ENCODE measurements at regions of chr19 and their contacts with region 1.

Region 1: DNA sequence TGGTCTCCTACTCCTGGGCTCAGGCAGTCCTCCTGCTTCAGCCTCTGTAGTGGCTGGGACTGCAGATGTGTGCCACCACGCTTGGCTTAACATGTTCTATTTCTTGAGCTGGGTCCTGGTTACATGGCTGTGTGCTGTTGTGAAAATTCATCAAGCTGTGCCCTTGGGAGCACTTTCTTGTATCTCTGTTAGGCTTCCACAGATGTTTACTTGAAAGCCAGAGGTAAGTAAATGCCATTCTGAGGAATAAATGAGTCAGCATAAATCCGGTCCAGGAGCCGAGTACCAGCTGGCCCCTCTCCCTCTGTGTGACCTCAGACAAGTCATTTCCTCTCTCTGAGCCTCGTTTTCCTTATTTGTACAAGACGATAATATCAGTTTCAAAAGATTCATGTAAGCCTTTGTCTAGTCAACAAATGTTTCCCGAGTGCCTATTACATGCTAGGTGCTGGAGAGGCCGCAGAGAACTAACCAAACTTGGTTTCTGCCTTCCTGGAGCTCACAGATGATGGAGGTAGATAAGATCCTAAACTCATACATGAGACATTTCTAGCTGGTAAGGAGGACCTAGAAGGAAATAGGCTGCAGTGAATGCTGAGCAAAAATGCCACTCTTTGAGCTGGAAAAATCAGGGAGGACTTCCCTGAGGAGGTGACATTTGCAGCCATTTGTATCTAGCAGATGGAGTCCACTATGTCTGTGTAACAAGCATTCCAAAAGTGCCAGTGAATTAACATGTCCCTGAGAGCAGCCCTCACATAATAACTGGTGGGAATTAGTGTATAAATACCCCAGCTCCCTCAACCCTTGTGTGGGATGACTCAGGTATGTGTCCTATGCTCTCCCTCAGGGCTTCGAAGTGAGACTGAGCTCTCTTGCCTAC is 2.7 kb upstream of the RASAL3 start:
- DNase-seq: peak; percentile 76
- H3K4me3 Mint-ChIP-seq: peak overlapping the region; percentile 49
- H3K27ac Mint-ChIP-seq: peak overlapping the region; percentile 92
- H3K4me1 Mint-ChIP-seq: peaks cover 62% of the 10 kb centered on the region
- H3K27me3 Mint-ChIP-seq: peaks cover 14% of the 10 kb centered on the region

Region 2: DNA sequence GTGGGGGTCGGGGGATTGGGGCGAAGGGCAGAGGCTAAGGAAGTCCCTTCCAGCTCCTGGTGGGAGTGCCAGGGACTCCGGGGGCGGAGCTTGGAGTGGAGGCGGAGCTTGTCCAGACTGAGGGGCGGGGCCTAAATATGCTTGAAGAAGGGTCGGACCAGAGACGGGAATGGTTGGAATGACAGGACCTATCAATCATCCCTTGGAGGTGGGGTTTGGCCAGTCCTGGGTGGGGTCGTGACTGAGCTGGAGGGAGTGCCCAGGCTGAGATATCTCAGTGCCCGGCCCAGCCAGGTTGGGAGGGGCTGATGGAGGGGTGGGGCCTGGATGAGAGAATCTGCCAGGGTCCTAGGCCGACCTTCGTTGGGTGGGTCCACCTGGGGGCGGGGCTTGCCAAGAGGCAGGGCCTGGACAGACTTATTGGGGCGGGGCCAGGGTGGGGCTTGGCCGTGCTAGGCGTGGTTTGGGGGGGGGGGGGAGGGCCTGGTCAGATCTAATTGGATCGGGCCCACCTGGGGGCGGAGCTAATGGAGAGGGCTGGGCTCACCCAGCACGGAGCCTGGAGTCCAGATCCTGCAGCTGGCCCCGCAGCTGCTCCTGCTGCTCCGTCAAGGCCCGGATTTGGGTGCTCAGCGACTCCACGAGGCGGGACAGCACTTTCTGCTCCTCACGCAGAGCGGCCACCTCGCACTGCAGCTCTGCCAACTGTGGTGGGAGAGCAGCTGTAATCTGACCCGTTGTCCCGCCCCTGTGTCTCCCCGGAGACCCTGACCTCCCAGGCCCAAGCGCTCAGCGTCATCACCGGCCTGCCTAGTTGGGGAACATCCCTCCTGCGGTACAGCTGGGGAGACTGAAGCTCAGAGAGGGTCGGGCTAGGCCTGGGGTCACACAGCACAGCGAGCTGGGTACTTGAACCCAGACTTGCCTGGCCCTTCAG is 14.7 kb before region 1 on chr19:
- CTCF ChIA-PET with region 1: interaction called, 25 read pairs
- POLR2A ChIA-PET with region 1: interaction called, 4 read pairs
- DNase-seq: no peak
- H3K4me3 Mint-ChIP-seq: no peak overlapping the region
- H3K27ac Mint-ChIP-seq: no peak overlapping the region
- H3K4me1 Mint-ChIP-seq: peaks cover 36% of the 10 kb centered on the region
- H3K27me3 Mint-ChIP-seq: no peaks in the 10 kb centered on the region

Region 3: GRCh38 chr19:15495151-15495550 is 28.1 kb after region 1 on chr19:
- CTCF ChIA-PET with region 1: no interaction called
- POLR2A ChIA-PET with region 1: no interaction called
- DNase-seq: no peak
- H3K4me3 Mint-ChIP-seq: no peak overlapping the region
- H3K27ac Mint-ChIP-seq: no peak overlapping the region
- H3K4me1 Mint-ChIP-seq: peaks cover 10% of the 10 kb centered on the region
- H3K27me3 Mint-ChIP-seq: peaks cover 11% of the 10 kb centered on the region

Region 4: DNA sequence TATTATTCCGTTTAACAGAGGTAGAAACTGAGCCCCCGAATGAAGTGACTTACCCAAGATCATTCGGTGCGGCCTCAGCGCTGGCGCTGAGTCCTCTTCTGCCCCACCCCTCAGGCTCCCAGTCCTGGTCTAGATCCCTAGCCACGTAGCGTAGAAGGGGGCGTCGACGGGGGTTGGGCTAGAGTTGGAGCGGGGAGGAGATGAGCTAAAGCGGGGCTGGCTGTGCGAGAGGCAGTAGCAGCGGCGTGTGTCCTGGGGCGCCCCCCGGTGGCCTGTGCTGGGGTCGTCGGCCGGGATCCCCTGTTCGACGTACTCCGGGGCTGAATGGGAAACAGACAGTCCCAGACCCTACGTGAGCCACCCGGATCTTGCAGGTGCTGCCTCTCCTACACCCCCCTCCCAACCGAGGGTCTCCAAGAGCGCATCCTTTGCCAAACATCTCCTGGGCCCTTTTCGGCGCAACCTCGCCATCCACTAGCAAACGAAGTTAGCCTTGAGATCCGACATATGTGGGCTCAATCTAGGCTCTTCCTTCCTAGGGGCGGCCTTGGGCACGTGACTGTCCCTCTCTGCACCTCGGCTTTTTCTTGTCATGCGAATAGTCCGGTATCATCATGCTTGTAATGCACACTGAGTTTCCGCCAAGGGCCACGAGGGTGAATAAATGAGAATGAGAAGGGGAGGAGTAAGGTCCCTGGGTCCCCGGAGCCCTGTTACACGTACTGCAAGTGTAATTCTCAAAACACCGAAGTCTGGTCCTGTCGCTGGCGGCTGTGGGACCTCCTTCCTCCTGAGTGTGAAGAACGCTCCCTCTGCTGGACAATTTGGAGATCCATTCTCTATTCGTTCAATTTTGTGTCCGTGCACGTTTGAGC is 88.9 kb after region 1 on chr19:
- CTCF ChIA-PET with region 1: interaction called, 13 read pairs
- POLR2A ChIA-PET with region 1: interaction called, 5 read pairs
- DNase-seq: peak; percentile 96
- H3K4me3 Mint-ChIP-seq: peak overlapping the region; percentile 71
- H3K27ac Mint-ChIP-seq: peak overlapping the region; percentile 87
- H3K4me1 Mint-ChIP-seq: peaks cover 31% of the 10 kb centered on the region
- H3K27me3 Mint-ChIP-seq: no peaks in the 10 kb centered on the region

Measured in activated CD4-positive, alpha-beta T cell treated with anti-CD3 and anti-CD28 coated beads, Interleukin-2, amount 10 ng/mL, durations not matched to agents 7 days and 5 days (primary cell).